H1 (cell line): ENCODE measurements at regions of chr7 and their contacts with region 1.

Region 1: DNA sequence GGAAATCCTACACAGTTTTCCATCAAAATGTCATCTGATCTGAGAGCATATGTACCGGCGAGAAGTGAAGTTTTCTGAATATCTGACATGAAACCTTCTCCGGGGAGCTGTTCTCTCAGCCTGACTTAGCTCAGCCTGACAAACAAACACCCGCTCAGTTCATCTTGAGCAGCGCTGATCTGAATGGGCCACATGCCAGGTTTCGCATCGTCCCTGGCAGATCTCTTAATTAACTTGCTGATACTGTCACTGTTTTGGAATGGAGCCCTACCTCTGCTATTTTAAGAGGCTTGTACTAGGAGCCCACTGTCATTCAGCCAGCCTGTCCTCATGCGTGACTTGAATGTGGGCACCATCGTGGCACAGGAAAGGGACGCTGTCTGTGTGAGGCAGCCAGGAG is 109.2 kb downstream of the STRA8 start:
- DNase-seq: no peak
- H3K4me3 ChIP-seq: no peak overlapping the region
- H3K27ac ChIP-seq: no peak overlapping the region
- H3K4me1 ChIP-seq: no peaks in the 10 kb centered on the region; a peak in 1 of 7 replicates
- H3K27me3 ChIP-seq: no peaks in the 10 kb centered on the region
- CTCF ChIP-seq: no peak
- EP300 ChIP-seq: no peak
- POLR2A ChIP-seq: no peak
- RAD21 ChIP-seq: no peak

Region 2: DNA sequence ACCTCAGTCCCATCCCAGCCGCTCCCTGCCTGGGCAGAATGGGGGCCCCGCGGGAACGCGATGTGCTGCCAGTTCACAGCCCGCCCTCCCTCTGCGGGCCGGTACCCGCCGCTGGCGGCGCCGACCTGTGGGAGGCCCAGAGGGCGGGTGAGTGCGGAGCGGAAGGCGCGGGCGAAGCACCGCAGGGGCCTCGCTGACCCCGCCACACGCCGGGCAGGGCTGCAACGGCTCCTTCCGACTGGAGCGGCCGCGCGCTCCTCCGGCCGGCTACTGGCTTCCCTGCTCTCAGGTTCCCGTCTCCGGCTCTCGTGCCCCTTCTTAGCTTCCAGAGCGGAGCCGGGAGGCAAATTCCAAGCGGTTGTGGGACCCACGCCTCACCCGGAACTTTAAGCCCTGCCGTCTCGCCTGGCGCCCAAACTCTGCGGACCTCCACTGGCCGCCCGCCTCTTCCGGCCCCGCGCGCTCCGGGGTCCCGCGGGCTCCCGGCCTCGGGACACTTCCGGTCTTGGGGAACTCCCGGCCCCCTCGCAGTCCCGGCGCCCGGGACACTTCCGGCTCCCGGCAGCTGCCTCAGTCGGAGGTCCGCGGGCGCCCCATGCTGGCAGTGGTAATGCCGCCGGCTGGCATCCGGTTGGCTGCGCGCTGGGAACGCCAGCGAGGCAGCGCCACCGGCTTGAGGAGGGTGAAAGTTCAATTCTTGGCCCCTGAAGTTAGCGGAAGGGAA is 172.5 kb before region 1 on chr7 and contains the start of gene CYREN:
- CTCF ChIA-PET with region 1: no interaction called
- POLR2A ChIA-PET with region 1: no interaction called
- DNase-seq: peak; percentile 78 to 87
- H3K4me3 ChIP-seq: peak within 1 kb of the TSS; percentile 60 to 81 (median 72)
- H3K27ac ChIP-seq: peak within 1 kb of the TSS; percentile 89
- H3K4me1 ChIP-seq: peaks cover 1 to 16% (median 3%) of the 10 kb centered on the region in 4 experiments; a peak in 4 of 7 replicates
- H3K27me3 ChIP-seq: no peaks in the 10 kb centered on the region
- CTCF ChIP-seq: peak in 2 of 3 experiments; percentile 13 to 43; a peak in 3 of 4 replicates
- EP300 ChIP-seq: peak in 1 of 2 experiments; percentile 56; a peak in 1 of 3 replicates
- POLR2A ChIP-seq: peak; percentile 50 to 84
- RAD21 ChIP-seq: peak; percentile 26 to 53; a peak in 3 of 4 replicates
- total RNA-seq, gene CYREN: 46.0 and 46.2 TPM in 2 replicates

Region 3: GRCh38 chr7:135355377-135356042 is 12.6 kb after region 1 on chr7:
- CTCF ChIA-PET with region 1: interaction called, 18 read pairs
- POLR2A ChIA-PET with region 1: no interaction called
- DNase-seq: no peak
- H3K4me3 ChIP-seq: no peak overlapping the region
- H3K27ac ChIP-seq: no peak overlapping the region
- H3K4me1 ChIP-seq: no peaks in the 10 kb centered on the region
- H3K27me3 ChIP-seq: no peaks in the 10 kb centered on the region
- CTCF ChIP-seq: no peak
- EP300 ChIP-seq: no peak
- POLR2A ChIP-seq: no peak
- RAD21 ChIP-seq: no peak

Region 4: DNA sequence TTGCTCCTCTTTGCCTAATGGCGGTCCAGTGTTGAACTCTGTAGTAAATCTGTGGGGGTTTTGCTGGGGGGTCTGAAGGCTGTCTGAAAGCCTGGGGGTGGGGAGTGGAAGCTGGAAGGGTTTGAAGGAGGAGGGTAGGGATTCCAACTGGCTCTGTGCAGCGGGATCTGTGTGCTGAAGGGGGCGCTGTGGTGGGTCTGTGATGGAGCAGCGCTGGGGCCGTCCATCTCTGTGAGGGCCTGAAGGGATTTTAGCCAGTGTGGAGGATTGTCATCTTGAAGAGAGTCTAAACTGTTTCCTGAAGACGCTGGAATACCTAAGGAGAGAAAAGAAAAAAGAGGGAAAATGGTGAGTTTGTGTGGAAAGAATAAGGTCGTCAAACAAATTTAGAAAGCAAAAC is 20.0 kb after region 1 on chr7:
- CTCF ChIA-PET with region 1: interaction called, 12 read pairs
- POLR2A ChIA-PET with region 1: no interaction called
- DNase-seq: peak in 1 of 2 experiments; percentile 72
- H3K4me3 ChIP-seq: no peak overlapping the region
- H3K27ac ChIP-seq: no peak overlapping the region
- H3K4me1 ChIP-seq: no peaks in the 10 kb centered on the region
- H3K27me3 ChIP-seq: no peaks in the 10 kb centered on the region
- CTCF ChIP-seq: peak; percentile 60 to 78 (median 75)
- EP300 ChIP-seq: no peak
- POLR2A ChIP-seq: no peak
- RAD21 ChIP-seq: peak; percentile 26 to 44; a peak in 3 of 4 replicates

Region 5: DNA sequence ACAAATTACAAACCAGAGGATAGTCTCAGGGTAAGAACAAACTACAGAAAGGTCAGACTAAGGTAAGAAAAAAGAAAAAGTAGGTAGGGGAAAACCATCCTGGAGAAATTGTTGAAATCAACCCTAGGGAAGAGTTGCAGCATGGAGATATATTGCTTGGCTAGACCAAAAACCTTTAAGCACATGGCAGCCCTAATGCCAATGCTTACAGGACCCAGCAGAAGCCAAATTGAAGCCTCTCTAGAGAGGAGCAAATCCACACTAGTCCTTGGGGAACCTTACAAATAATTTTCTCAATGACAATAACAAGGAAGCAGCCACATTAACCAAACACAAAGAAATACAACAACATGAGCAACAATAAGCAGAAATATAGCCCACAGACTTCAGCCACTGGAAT is 85.1 kb after region 1 on chr7:
- CTCF ChIA-PET with region 1: no interaction called
- POLR2A ChIA-PET with region 1: no interaction called
- DNase-seq: no peak
- H3K4me3 ChIP-seq: no peak overlapping the region
- H3K27ac ChIP-seq: no peak overlapping the region
- H3K4me1 ChIP-seq: 0 out of 7 replicates have a peak, but pooled peaks cover 0 to 3% (median 0%) of the 10 kb centered on the region in 4 experiments
- H3K27me3 ChIP-seq: no peaks in the 10 kb centered on the region
- CTCF ChIP-seq: no peak
- EP300 ChIP-seq: no peak
- POLR2A ChIP-seq: no peak
- RAD21 ChIP-seq: no peak

Region 6: GRCh38 chr7:135662373-135663114 is 319.7 kb after region 1 on chr7 and contains the start of gene STMP1:
- CTCF ChIA-PET with region 1: no interaction called
- POLR2A ChIA-PET with region 1: no interaction called
- DNase-seq: peak; percentile 92 to 98
- H3K4me3 ChIP-seq: peak within 1 kb of the TSS; percentile 87 to 95 (median 93)
- H3K27ac ChIP-seq: peak within 1 kb of the TSS; percentile 81
- H3K4me1 ChIP-seq: no peaks in the 10 kb centered on the region; a peak in 2 of 7 replicates
- H3K27me3 ChIP-seq: no peaks in the 10 kb centered on the region
- CTCF ChIP-seq: peak; percentile 48 to 72 (median 67); a peak in 3 of 4 replicates
- EP300 ChIP-seq: no peak
- POLR2A ChIP-seq: peak; percentile 90 to 93
- RAD21 ChIP-seq: peak; percentile 42 to 46; a peak in 2 of 4 replicates
- total RNA-seq, gene STMP1: 36.7 and 36.9 TPM in 2 replicates